Activated CD4-positive, alpha-beta T cell treated with anti-CD3 and anti-CD28 coated beads for 36 hours (primary cell): ENCODE measurements at regions of chr20 and their contacts with region 1.

Region 1: DNA sequence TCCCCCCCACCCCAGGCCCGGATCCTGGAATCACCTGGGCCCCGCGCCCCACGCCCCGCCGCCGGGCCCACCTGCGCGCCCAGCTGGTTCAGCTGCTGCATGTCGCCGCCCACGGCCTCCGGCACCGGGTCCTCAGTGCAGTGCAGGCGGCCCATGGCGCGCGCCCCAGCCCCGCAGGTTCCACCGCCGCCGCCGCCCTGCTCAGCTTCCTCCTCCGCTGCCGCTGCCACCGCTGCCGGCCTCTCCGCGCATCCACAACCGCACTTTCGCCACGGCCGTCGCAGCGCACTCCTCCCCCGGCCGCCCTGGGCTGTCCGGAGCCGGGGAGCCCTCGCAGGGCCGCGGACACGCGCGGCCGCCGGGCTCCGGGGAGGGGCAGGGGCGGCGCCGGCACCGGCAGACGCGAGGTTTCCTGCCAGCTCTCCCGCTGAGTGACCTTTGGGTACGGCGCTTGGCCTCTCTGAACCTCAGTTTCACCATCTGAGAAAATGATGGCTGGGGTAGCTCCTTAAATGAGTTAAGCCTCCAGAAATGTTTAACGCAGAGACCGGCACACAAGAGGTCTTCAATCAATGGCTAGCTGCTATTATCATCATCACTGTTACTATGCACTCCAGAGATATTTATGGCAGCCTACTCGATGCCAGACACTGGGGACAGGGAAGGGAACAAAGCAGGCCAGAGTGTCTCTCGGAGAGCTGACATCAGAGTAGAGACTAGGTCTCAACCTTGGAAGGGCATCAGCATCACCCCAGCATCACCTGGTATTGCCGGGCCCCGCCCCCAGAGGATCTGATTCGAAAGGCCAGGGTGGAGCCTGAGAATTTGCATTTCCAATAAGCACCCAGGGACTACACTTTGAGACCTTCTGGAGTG is at the start of gene COMMD7:
- DNase-seq: peak; percentile 90
- ATAC-seq: peak; percentile 89
- H3K4me3 Mint-ChIP-seq: peak within 1 kb of the TSS; percentile 93
- H3K27ac Mint-ChIP-seq: peak within 1 kb of the TSS; percentile 97
- H3K4me1 Mint-ChIP-seq: peaks cover 31% of the 10 kb centered on the region
- H3K27me3 Mint-ChIP-seq: no peaks in the 10 kb centered on the region
- total RNA-seq, gene COMMD7: 35.9 to 38.8 TPM

Region 2: GRCh38 chr20:32582659-32583580 is 160.6 kb before region 1 on chr20:
- CTCF ChIA-PET with region 1: no interaction called
- POLR2A ChIA-PET with region 1: no interaction called
- intact Hi-C with region 1: loop called in 1 of 2 experiments (anchors 5 kb)
- DNase-seq: peak; percentile 49
- ATAC-seq: no peak
- H3K4me3 Mint-ChIP-seq: peak overlapping the region; percentile 52
- H3K27ac Mint-ChIP-seq: no peak overlapping the region
- H3K4me1 Mint-ChIP-seq: peaks cover 55% of the 10 kb centered on the region
- H3K27me3 Mint-ChIP-seq: peaks cover 5% of the 10 kb centered on the region

Region 3: GRCh38 chr20:32674362-32674789 is 69.1 kb before region 1 on chr20:
- CTCF ChIA-PET with region 1: interaction called, 3 read pairs
- POLR2A ChIA-PET with region 1: no interaction called
- intact Hi-C with region 1: loop called in 1 of 2 experiments (anchors 2 kb)
- DNase-seq: peak; percentile 88
- ATAC-seq: peak; percentile 73
- H3K4me3 Mint-ChIP-seq: no peak overlapping the region
- H3K27ac Mint-ChIP-seq: no peak overlapping the region
- H3K4me1 Mint-ChIP-seq: peaks cover 14% of the 10 kb centered on the region
- H3K27me3 Mint-ChIP-seq: no peaks in the 10 kb centered on the region

Region 4: DNA sequence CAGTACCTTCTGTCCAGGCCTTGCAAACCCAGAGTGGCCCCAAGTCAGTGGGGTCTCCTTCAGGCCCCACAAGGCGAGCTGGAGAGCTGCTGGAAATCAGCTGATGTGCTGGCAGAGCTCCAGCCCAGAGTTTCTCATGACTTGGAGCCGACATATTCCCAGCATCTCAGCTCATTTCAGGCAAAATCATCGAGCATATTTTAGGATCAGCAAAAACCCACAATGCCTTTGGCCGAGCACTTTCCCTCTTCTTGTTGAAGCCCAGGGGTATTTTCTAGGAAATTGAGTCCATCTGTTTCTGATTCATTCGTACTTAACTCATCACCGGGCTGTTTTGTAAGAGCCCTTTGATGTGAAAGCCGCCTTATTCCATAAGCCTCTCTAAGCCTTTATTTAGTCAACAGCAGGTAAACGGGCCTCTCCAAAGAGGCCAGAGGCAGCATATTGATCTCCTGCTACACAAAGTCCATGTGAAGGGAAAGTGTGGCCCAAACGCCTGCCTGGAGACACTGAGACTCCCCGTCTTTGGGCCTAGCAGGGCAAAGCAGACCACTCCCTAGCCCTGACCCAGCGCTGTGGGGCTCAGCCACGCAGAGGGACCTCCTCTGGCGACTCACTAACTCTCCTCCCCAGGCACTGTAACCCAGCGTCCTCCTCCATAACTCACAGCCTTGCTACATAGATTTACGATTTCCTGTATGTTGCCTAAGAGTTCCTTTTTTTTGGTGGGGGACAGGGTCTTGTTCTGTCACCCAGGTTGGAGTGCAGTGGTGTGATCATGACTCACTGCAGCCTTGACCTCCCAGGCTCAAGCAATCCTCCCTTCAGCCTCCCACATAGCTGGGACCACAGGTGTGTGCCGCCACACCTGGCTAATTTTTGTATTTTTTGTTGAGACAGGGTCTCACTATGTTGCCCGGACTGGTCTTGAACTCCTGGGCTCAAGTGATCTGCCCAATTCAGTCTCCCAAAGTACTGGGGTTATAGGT is 57.6 kb before region 1 on chr20:
- CTCF ChIA-PET with region 1: no interaction called
- POLR2A ChIA-PET with region 1: no interaction called
- intact Hi-C with region 1: no loop called
- DNase-seq: no peak
- ATAC-seq: no peak
- H3K4me3 Mint-ChIP-seq: no peak overlapping the region
- H3K27ac Mint-ChIP-seq: no peak overlapping the region
- H3K4me1 Mint-ChIP-seq: peaks cover 7% of the 10 kb centered on the region
- H3K27me3 Mint-ChIP-seq: no peaks in the 10 kb centered on the region

Region 5: GRCh38 chr20:32819992-32820710 is 76.7 kb after region 1 on chr20:
- CTCF ChIA-PET with region 1: interaction called, 3 read pairs
- POLR2A ChIA-PET with region 1: interaction called, 3 read pairs
- intact Hi-C with region 1: loop called in 1 of 2 experiments (anchors 2 kb)
- DNase-seq: peak; percentile 85
- ATAC-seq: peak; percentile 76
- H3K4me3 Mint-ChIP-seq: peak overlapping the region; percentile 87
- H3K27ac Mint-ChIP-seq: peak overlapping the region; percentile 92
- H3K4me1 Mint-ChIP-seq: peaks cover 37% of the 10 kb centered on the region
- H3K27me3 Mint-ChIP-seq: no peaks in the 10 kb centered on the region

Region 6: DNA sequence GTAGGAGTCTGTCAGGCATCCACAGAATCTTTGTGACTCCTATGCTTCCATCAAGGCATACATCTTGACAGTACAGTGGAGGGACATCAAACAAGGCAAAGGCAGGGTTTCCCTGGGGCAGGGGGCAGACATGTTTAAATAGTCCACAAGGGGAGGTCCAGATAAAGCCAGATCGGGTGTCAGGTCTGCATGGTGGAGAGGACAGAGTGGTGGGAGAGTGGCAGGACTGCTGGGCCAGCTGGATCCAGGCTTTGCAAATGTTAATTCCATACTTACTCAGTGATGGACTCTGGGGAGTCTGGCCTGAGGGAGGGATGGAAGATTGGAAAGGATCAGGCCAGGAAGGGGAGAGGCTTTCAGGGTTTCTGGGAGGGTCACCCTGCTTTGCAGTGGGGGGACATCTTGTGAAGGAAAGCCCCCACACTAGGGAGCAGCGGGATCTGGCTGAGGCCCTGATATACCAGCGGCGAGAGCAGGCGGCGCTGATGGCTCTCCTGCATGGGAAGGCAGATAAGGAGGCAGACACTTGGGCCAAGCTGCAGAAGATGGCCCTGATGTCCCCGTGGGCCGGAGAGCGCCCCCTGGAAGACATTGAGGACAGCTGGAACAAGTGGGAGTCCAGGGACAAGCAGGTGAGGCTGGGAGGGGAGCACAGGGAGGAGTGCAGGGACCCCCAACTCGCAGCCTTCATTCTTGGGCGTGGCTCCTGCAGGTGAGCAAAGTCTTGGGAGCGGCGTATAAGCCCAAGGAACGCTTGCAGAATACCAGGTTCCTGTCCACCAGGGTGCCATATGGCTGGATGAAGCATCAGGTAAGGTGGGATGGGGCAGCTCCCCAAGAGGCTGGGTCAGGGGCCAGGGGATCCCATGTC is 216.1 kb after region 1 on chr20:
- CTCF ChIA-PET with region 1: no interaction called
- POLR2A ChIA-PET with region 1: no interaction called
- intact Hi-C with region 1: no loop called
- DNase-seq: no peak
- ATAC-seq: no peak
- H3K4me3 Mint-ChIP-seq: no peak overlapping the region
- H3K27ac Mint-ChIP-seq: no peak overlapping the region
- H3K4me1 Mint-ChIP-seq: peaks cover 19% of the 10 kb centered on the region
- H3K27me3 Mint-ChIP-seq: no peaks in the 10 kb centered on the region